GM12878 (cell line): ENCODE measurements at regions of chr5 and their contacts with region 1.

Region 1: GRCh38 chr5:39948867-39949468 is 524.2 kb upstream of the DAB2 start:
- DNase-seq: peak; percentile 7
- ATAC-seq: peak; percentile 97
- H3K4me3 ChIP-seq: no peak overlapping the region
- H3K27ac ChIP-seq: no peak overlapping the region
- H3K4me1 ChIP-seq: no peaks in the 10 kb centered on the region
- H3K27me3 ChIP-seq: no peaks in the 10 kb centered on the region
- CTCF ChIP-seq: peak; percentile 55 to 69 (median 59)
- EP300 ChIP-seq: no peak
- POLR2A ChIP-seq: no peak
- RAD21 ChIP-seq: peak; percentile 85

Region 2: GRCh38 chr5:39461026-39461682 is 487.8 kb before region 1 on chr5:
- CTCF ChIA-PET with region 1: no interaction called
- POLR2A ChIA-PET with region 1: no interaction called
- RAD21 ChIA-PET with region 1: no interaction called
- SMC1A ChIA-PET with region 1: no interaction called
- in situ Hi-C with region 1: no loop called
- intact Hi-C with region 1: no loop called
- DNase-seq: peak; percentile 9
- ATAC-seq: peak; percentile 83
- H3K4me3 ChIP-seq: no peak overlapping the region
- H3K27ac ChIP-seq: no peak overlapping the region
- H3K4me1 ChIP-seq: no peaks in the 10 kb centered on the region
- H3K27me3 ChIP-seq: no peaks in the 10 kb centered on the region
- CTCF ChIP-seq: no peak
- EP300 ChIP-seq: no peak
- POLR2A ChIP-seq: no peak
- RAD21 ChIP-seq: no peak

Region 3: GRCh38 chr5:39578887-39579497 is 370.0 kb before region 1 on chr5:
- CTCF ChIA-PET with region 1: interaction called, 3 read pairs
- POLR2A ChIA-PET with region 1: no interaction called
- RAD21 ChIA-PET with region 1: no interaction called
- SMC1A ChIA-PET with region 1: no interaction called
- in situ Hi-C with region 1: loop called (anchors 10 kb)
- intact Hi-C with region 1: loop called (anchors 5 kb)
- DNase-seq: no peak
- ATAC-seq: no peak
- H3K4me3 ChIP-seq: no peak overlapping the region
- H3K27ac ChIP-seq: no peak overlapping the region
- H3K4me1 ChIP-seq: no peaks in the 10 kb centered on the region
- H3K27me3 ChIP-seq: 0 out of 4 replicates have a peak, but pooled peaks cover 0 to 2% of the 10 kb centered on the region in 2 experiments
- CTCF ChIP-seq: peak; percentile 33 to 43 (median 43); a peak in 4 of 6 replicates
- EP300 ChIP-seq: no peak
- POLR2A ChIP-seq: no peak
- RAD21 ChIP-seq: peak; percentile 48

Region 4: DNA sequence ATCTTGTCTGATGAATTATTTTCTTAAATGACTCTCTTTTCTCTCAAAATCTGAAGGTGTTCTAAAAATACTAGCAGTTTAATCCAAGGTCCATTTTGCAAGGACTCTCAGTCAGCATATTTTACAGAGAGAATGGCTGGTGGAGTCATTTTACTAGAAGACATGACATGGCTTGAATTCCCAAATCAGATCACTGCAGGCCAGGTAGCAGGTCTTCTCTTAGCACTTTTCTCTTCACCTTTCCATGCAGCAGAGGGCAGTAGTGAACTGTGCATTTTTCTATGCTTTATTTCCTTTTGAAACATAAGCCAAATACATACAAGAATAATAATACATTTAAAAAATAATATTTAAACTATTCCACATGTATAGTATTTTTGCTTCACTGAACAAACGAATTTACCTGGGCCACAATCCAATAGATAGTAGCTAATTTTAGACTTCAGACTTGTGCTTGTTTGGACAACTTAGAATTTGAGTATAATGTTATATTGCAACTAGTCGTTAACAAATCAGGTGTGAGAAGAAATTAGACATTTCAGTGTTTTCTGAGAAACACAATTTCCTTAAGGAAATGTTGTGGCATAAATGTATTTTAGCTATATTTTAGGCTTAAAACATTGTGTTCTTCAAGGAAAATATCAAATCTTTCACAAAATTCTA is 234.8 kb before region 1 on chr5:
- CTCF ChIA-PET with region 1: interaction called, 3 read pairs
- POLR2A ChIA-PET with region 1: no interaction called
- RAD21 ChIA-PET with region 1: no interaction called
- SMC1A ChIA-PET with region 1: interaction called, 4 read pairs
- in situ Hi-C with region 1: no loop called
- intact Hi-C with region 1: loop called (anchors 10 kb)
- DNase-seq: peak; percentile 3
- ATAC-seq: peak; percentile 63
- H3K4me3 ChIP-seq: no peak overlapping the region
- H3K27ac ChIP-seq: no peak overlapping the region
- H3K4me1 ChIP-seq: no peaks in the 10 kb centered on the region
- H3K27me3 ChIP-seq: no peaks in the 10 kb centered on the region
- CTCF ChIP-seq: peak; percentile 49 to 53 (median 52)
- EP300 ChIP-seq: no peak
- POLR2A ChIP-seq: no peak
- RAD21 ChIP-seq: peak; percentile 87

Region 5: DNA sequence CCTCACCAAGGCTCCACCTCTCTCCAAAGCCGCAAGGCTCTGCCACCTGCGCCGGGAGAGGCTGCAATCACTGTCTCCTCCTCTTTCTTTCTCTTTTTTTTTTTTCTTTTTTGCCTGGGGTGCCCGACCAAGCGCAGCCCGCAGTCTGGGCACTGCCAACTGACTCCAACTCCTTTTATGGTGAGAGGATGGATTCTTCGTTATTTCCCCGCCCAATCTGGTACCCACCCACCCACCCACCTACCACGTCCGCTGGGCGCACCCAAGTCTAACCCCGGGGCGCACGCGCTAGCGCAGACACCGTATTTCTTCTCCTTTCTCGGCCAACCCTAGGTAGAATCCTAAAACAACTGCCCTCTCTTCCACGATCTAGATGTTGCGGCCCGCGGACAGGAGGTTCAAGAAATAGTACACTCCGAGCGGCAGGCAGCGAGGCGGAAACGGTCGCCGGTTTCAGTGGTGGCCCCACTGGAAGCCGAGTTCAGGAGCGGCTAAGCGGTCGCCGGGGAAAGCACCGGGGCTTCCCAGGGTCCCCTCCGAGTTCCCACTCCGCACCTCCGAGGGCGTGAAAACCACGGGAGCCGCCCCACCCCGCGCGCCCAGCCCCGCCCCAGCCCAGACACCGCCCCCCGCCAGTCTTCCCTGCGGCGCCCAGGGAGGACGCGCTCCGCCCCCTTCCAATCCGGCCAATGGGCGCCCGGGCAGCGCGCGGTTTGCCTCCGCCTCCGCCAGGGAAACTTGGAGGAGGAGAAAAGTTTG is 730.4 kb after region 1 on chr5:
- CTCF ChIA-PET with region 1: interaction called, 40 read pairs
- POLR2A ChIA-PET with region 1: no interaction called
- RAD21 ChIA-PET with region 1: interaction called, 7 read pairs
- SMC1A ChIA-PET with region 1: interaction called, 41 read pairs
- in situ Hi-C with region 1: loop called (anchors 5 kb)
- intact Hi-C with region 1: no loop called
- DNase-seq: peak; percentile 34
- ATAC-seq: peak; percentile 87
- H3K4me3 ChIP-seq: peak overlapping the region; percentile 77
- H3K27ac ChIP-seq: no peak overlapping the region
- H3K4me1 ChIP-seq: peaks cover 8% of the 10 kb centered on the region
- H3K27me3 ChIP-seq: peaks cover 5 to 19% of the 10 kb centered on the region in 2 experiments; a peak in 3 of 4 replicates
- CTCF ChIP-seq: no peak
- EP300 ChIP-seq: no peak
- POLR2A ChIP-seq: no peak
- RAD21 ChIP-seq: no peak

Region 6: GRCh38 chr5:40694433-40694832 is 745.5 kb after region 1 on chr5:
- CTCF ChIA-PET with region 1: interaction called, 28 read pairs
- POLR2A ChIA-PET with region 1: no interaction called
- RAD21 ChIA-PET with region 1: interaction called, 18 read pairs
- SMC1A ChIA-PET with region 1: interaction called, 13 read pairs
- in situ Hi-C with region 1: no loop called
- intact Hi-C with region 1: no loop called
- DNase-seq: no peak
- ATAC-seq: no peak
- H3K4me3 ChIP-seq: no peak overlapping the region
- H3K27ac ChIP-seq: no peak overlapping the region
- H3K4me1 ChIP-seq: no peaks in the 10 kb centered on the region
- H3K27me3 ChIP-seq: no peaks in the 10 kb centered on the region
- CTCF ChIP-seq: no peak
- EP300 ChIP-seq: no peak
- POLR2A ChIP-seq: no peak
- RAD21 ChIP-seq: no peak

Region 7: GRCh38 chr5:40736103-40736875 is 787.3 kb after region 1 on chr5:
- CTCF ChIA-PET with region 1: interaction called, 11 read pairs
- POLR2A ChIA-PET with region 1: no interaction called
- RAD21 ChIA-PET with region 1: interaction called, 3 read pairs
- SMC1A ChIA-PET with region 1: interaction called, 10 read pairs
- in situ Hi-C with region 1: no loop called
- intact Hi-C with region 1: loop called (anchors 2 kb)
- DNase-seq: peak; percentile 37
- ATAC-seq: peak; percentile 89
- H3K4me3 ChIP-seq: no peak overlapping the region
- H3K27ac ChIP-seq: no peak overlapping the region
- H3K4me1 ChIP-seq: no peaks in the 10 kb centered on the region
- H3K27me3 ChIP-seq: no peaks in the 10 kb centered on the region
- CTCF ChIP-seq: peak; percentile 62 to 76 (median 63)
- EP300 ChIP-seq: no peak
- POLR2A ChIP-seq: no peak
- RAD21 ChIP-seq: peak; percentile 78

Region 8: GRCh38 chr5:40879163-40879942 is 930.4 kb after region 1 on chr5:
- CTCF ChIA-PET with region 1: no interaction called
- POLR2A ChIA-PET with region 1: no interaction called
- RAD21 ChIA-PET with region 1: no interaction called
- SMC1A ChIA-PET with region 1: interaction called, 3 read pairs
- in situ Hi-C with region 1: loop called (anchors 25 kb)
- intact Hi-C with region 1: loop called (anchors 5 kb)
- DNase-seq: no peak
- ATAC-seq: peak; percentile 67
- H3K4me3 ChIP-seq: no peak overlapping the region
- H3K27ac ChIP-seq: no peak overlapping the region
- H3K4me1 ChIP-seq: no peaks in the 10 kb centered on the region
- H3K27me3 ChIP-seq: no peaks in the 10 kb centered on the region
- CTCF ChIP-seq: peak; percentile 6 to 48 (median 46); a peak in 4 of 6 replicates
- EP300 ChIP-seq: no peak
- POLR2A ChIP-seq: no peak
- RAD21 ChIP-seq: peak; percentile 45; the same call in 1 of the 2 replicates